Adrenal gland (tissue), 19 donors: ENCODE measurements at regions of chr16 and their contacts with region 1.

Region 1: DNA sequence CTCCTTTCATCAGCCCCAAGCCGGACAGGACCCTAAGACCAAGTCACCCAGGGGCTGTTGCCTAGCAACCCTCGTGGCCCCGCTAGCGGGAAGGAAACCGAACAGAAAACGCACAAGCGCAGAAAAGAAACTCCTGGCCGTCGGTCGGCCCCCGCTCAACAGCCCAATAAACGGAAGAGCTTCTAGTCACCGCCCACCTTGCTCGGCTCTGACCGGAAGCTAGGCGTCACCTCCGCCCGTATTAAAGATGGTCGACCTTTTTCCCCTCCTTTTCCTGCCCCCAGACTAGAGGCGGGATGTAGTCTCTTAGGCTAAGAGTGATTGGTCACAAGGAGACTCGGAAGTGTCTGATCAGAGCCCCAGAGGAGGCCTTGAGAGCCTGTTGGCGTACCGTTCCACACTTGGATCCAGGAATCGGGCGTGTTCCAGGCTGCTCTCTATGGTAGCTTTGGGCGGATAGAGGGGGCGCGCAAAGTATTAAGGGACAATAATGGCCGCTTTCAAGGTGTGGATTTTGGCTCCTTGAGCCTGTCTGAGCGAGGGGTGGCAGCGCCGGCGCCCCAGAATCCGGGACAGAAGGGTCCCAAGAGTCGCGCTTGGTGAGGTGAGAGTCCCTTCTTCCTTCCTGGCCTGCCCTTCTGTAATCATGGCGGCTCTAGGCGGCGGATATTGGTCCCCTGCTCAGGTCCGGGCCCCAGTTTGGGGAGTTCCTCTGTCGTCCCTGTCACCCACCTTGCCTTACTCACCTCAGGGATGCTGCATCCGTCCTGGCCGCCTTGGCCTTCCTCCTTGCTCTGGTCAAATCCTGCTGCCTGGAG is at the starts of genes DHX38 and TXNL4B:
- DNase-seq: peak; percentile 93 to 99 (median 97)
- H3K4me3 ChIP-seq: peak within 1 kb of the TSS; percentile 76 to 93 (median 85)
- H3K27ac ChIP-seq: peak within 1 kb of the TSS; percentile 29 to 94 (median 79)
- H3K4me1 ChIP-seq: peaks cover 17 to 32% of the 10 kb centered on the region in 2 donors
- H3K27me3 ChIP-seq: no peaks in the 10 kb centered on the region
- CTCF ChIP-seq: no peak
- POLR2A ChIP-seq: peak; percentile 87 to 97
- total RNA-seq, gene DHX38: 31.9 to 55.6 (median 39.4) TPM
- total RNA-seq, gene TXNL4B: 3.8 to 18.3 (median 9.5) TPM

Region 2: DNA sequence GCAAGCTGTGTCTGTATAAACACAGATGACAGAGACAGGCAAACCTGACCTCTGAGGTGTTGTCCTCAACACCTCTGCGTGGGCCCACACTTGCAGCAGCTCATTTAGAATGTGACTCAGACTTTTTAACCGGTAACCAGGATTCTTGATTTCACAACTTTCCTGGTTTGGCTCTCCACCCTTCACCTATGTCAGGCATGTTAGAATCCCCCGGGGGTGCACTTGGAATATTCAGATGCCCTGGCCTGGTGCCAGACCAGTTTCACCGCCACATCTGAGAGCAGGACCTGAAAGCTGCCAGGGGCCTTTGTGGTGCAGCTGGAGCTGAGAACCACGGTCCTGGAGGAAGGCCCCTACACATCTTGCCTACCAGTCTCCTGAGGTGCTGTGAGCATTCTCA is 80.3 kb before region 1 on chr16:
- intact Hi-C with region 1: loop called in 1 of 2 experiments (anchors 5 kb)
- DNase-seq: no peak
- H3K4me3 ChIP-seq: no peak overlapping the region
- H3K27ac ChIP-seq: peak overlapping the region in 1 of 5 donors; percentile 27
- H3K4me1 ChIP-seq: no peaks in the 10 kb centered on the region
- H3K27me3 ChIP-seq: no peaks in the 10 kb centered on the region
- CTCF ChIP-seq: no peak
- POLR2A ChIP-seq: no peak

Region 3: GRCh38 chr16:72149676-72150464 is 56.2 kb after region 1 on chr16:
- intact Hi-C with region 1: no loop called
- DNase-seq: no peak
- H3K4me3 ChIP-seq: no peak overlapping the region
- H3K27ac ChIP-seq: no peak overlapping the region
- H3K4me1 ChIP-seq: no peaks in the 10 kb centered on the region
- H3K27me3 ChIP-seq: no peaks in the 10 kb centered on the region
- CTCF ChIP-seq: no peak
- POLR2A ChIP-seq: no peak

Region 4: DNA sequence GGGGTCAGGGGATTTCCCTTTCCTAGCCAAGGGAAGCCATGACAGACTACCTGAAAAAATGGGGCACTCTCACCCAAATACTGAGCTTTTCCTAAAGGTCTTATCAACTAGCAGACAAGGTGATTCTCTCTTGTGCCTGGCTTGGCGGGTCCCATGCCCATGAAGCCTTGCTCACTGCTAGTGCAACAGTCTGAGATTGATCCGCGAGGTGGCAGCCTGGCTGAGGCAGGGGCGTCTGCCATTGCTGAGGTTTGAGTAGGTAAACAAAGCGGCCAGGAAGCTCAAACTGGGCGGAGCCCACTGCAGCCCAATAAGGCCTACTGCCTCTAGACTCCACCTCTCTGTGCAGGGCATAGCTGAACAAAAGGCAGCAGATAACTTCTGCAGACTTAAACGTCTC is 230.9 kb after region 1 on chr16:
- intact Hi-C with region 1: no loop called
- DNase-seq: no peak
- H3K4me3 ChIP-seq: no peak overlapping the region
- H3K27ac ChIP-seq: no peak overlapping the region
- H3K4me1 ChIP-seq: no peaks in the 10 kb centered on the region
- H3K27me3 ChIP-seq: no peaks in the 10 kb centered on the region
- CTCF ChIP-seq: no peak
- POLR2A ChIP-seq: no peak

Region 5: GRCh38 chr16:72552654-72553053 is 459.0 kb after region 1 on chr16:
- intact Hi-C with region 1: no loop called
- DNase-seq: no peak
- H3K4me3 ChIP-seq: no peak overlapping the region
- H3K27ac ChIP-seq: no peak overlapping the region
- H3K4me1 ChIP-seq: no peaks in the 10 kb centered on the region
- H3K27me3 ChIP-seq: no peaks in the 10 kb centered on the region
- CTCF ChIP-seq: no peak
- POLR2A ChIP-seq: no peak